ENCODE measurements at regions of chr4 and their contacts with region 1.

Region 1: GRCh38 chr4:153344131-153345010 is at the start of gene MND1:
- DNase-seq: peak; percentile 96
- total RNA-seq, gene MND1: 0.90 to 1.9 TPM

Region 2: DNA sequence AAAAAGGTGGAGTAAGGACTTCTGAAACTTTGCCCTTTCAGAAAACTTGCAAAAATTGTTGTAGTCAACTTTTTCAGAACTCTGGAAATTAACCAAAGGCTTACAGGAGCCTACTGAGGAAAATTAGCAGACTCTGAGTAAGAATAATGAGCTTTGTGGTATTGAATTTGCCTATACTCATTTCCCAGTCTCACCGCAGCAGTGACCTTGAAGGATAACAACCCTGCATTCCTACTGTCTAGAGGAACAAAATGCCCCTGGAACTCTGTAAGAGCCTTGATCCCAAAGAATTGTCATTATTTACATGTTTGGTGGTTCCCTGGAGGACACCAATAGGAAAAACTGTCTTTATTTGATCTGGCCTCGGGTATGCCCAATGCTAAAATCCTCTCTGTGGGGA is 58.0 kb after region 1 on chr4:
- intact Hi-C with region 1: no loop called
- DNase-seq: no peak

Region 3: GRCh38 chr4:153451911-153452657 is 107.7 kb after region 1 on chr4:
- intact Hi-C with region 1: loop called in 1 of 2 experiments (anchors 10 kb)
- DNase-seq: peak; percentile 82

Region 4: GRCh38 chr4:153466081-153466948 is 121.9 kb after region 1 on chr4 and contains the start of gene TMEM131L:
- intact Hi-C with region 1: loop called in 1 of 2 experiments (anchors 10 kb)
- DNase-seq: peak; percentile 90
- total RNA-seq, gene TMEM131L: 11.4 to 12.0 TPM

Region 5: GRCh38 chr4:153573881-153574802 is 229.8 kb after region 1 on chr4:
- intact Hi-C with region 1: loop called (anchors 2 to 5 kb)
- DNase-seq: peak; percentile 86

Measured in posterior vena cava (tissue), 2 donors.